PC-9 (cell line): ENCODE measurements at regions of chr14 and their contacts with region 1.

Region 1: GRCh38 chr14:60184146-60184904 is 19.1 kb upstream of the DHRS7 start:
- DNase-seq: peak in 1 of 2 experiments; percentile 61
- H3K4me3 ChIP-seq: peak overlapping the region; percentile 55
- H3K27ac ChIP-seq: 0 out of 2 replicates have a peak overlapping the region, but pooled peaks have one; percentile 6
- H3K4me1 ChIP-seq: peaks cover 10% of the 10 kb centered on the region; the same call in 1 of the 2 replicates
- H3K27me3 ChIP-seq: no peaks in the 10 kb centered on the region
- CTCF ChIP-seq: peak; percentile 96

Region 2: GRCh38 chr14:59028476-59029202 is 1155.7 kb before region 1 on chr14:
- CTCF ChIA-PET with region 1: no interaction called
- POLR2A ChIA-PET with region 1: no interaction called
- intact Hi-C with region 1: loop called (anchors 5 kb)
- DNase-seq: peak; percentile 56 to 57
- H3K4me3 ChIP-seq: no peak overlapping the region
- H3K27ac ChIP-seq: no peak overlapping the region
- H3K4me1 ChIP-seq: no peaks in the 10 kb centered on the region
- H3K27me3 ChIP-seq: no peaks in the 10 kb centered on the region
- CTCF ChIP-seq: peak; percentile 79

Region 3: DNA sequence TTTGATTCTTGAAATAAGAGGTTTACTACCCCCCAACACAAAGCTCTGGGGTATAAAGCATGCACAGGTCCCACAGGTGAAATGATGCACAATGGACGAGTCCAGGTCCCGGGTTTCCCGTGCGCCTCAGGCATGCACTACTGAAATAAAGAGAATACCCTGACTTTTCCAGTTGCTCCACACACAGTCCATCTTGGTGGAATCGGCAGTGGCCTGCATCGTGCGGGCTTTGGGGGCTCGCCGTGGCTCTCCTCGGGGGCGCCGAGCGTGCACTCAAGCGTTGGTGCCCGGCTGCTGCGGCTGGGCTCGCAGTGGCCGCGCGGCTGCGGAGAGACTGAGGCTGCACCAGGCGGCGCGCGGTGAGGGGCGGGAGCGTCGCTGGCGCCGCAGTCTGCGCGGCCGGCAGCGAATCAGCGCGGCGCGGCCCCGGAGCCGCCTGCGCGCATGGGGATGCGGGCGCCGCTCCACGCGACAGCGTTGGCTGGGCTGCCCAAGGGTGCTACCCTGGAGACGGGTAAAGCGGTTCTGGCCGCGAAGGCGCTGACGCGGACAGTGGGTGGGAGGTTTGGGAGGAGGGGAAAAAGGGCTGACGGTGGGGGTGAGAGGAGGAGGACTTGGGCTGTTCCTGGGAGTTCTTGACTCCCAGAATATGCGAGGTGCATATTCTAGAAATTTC is 553.9 kb before region 1 on chr14:
- CTCF ChIA-PET with region 1: no interaction called
- POLR2A ChIA-PET with region 1: no interaction called
- intact Hi-C with region 1: loop called (anchors 2 kb)
- DNase-seq: no peak
- H3K4me3 ChIP-seq: no peak overlapping the region
- H3K27ac ChIP-seq: no peak overlapping the region
- H3K4me1 ChIP-seq: no peaks in the 10 kb centered on the region
- H3K27me3 ChIP-seq: no peaks in the 10 kb centered on the region; the same call in 1 of the 2 replicates
- CTCF ChIP-seq: no peak

Region 4: GRCh38 chr14:59897761-59898383 is 286.5 kb before region 1 on chr14:
- CTCF ChIA-PET with region 1: no interaction called
- POLR2A ChIA-PET with region 1: no interaction called
- intact Hi-C with region 1: no loop called
- DNase-seq: peak in 1 of 2 experiments; percentile 14
- H3K4me3 ChIP-seq: no peak overlapping the region
- H3K27ac ChIP-seq: no peak overlapping the region
- H3K4me1 ChIP-seq: no peaks in the 10 kb centered on the region
- H3K27me3 ChIP-seq: no peaks in the 10 kb centered on the region
- CTCF ChIP-seq: peak; percentile 71

Region 5: DNA sequence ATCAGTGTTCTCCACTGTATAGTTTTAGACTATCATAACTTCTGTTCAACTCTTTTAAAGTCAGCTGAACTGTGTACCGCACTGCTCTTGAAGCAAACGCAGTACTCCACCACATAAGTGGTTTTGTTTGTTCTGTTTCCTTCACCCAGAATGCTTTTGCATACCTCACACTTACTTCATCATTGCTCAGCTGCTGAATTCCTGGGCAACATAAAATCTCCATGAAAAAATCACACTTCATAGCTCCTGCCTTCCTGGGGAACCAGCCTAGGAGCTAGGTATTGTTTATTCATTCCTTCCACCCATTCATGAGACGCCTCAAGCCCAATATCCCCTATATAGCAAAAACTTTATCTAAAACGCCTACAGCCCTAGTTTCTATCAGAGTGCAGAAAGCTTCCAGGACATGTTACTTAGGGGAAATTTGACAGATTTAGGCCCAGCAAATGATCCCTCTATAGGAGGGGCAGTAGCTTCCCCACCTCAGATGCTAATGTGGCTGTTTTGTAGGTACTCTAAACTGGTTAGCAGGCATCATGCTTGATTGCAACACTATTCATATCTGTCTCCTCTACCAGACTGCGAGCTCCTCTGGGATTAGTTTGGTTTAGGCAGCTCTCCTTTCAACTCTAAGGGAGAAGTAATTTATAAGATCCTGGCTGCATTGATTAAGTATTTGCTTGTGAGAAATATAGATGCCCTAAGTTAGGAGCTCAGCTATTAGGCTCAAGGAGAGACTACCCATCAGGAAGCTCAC is 219.9 kb before region 1 on chr14:
- CTCF ChIA-PET with region 1: interaction called, 11 read pairs
- POLR2A ChIA-PET with region 1: no interaction called
- intact Hi-C with region 1: loop called (anchors 1 kb)
- DNase-seq: no peak
- H3K4me3 ChIP-seq: no peak overlapping the region
- H3K27ac ChIP-seq: no peak overlapping the region
- H3K4me1 ChIP-seq: no peaks in the 10 kb centered on the region
- H3K27me3 ChIP-seq: no peaks in the 10 kb centered on the region
- CTCF ChIP-seq: no peak

Region 6: DNA sequence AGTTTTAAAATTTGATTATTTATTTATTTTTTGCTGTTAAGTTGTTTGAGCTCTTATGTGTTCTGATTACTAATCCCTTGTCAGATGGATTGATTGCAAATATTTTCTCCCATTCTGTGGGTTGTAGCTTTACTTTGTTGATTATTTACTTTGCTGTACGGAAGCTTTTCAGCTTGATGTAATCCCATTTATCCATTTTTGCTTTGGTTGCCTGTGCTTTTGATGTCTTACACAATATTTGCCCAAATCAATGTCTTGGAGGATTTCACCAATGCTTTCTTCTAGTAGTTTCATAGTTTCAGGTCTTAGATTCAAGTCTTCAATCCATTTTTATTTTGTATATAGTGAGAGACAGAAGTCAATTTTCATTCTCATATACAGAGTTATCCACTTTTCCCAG is 149.1 kb before region 1 on chr14:
- CTCF ChIA-PET with region 1: no interaction called
- POLR2A ChIA-PET with region 1: no interaction called
- intact Hi-C with region 1: no loop called
- DNase-seq: no peak
- H3K4me3 ChIP-seq: no peak overlapping the region
- H3K27ac ChIP-seq: no peak overlapping the region
- H3K4me1 ChIP-seq: no peaks in the 10 kb centered on the region
- H3K27me3 ChIP-seq: no peaks in the 10 kb centered on the region; the same call in 1 of the 2 replicates
- CTCF ChIP-seq: no peak

Region 7: DNA sequence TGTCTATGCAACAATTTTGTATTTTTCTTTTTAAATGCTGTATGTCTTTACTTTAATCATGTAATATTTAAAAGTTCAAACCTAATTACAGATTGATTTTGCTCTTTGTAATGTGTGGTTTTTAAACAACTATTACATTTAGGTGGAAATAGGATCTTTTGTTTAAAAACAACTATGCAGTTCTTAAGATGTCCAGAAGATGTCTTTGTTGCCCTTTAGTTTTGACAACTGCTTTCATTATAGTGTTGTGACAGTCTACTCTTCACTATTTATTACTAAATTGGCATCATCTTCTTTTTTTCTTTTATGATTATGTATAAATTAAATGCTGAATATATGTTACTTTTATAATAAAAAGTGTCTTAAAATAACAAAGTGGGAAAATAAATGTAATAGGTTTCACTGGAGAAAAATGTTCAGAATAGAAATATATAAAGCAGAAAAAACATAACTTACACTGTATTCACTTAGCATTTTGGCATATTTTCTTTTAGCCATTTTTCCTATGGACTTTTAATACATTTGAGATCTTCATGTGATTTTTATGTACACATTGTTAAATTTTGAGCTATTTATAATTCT is 119.7 kb before region 1 on chr14:
- CTCF ChIA-PET with region 1: interaction called, 8 read pairs
- POLR2A ChIA-PET with region 1: interaction called, 4 read pairs
- intact Hi-C with region 1: loop called (anchors 1 kb)
- DNase-seq: no peak
- H3K4me3 ChIP-seq: no peak overlapping the region
- H3K27ac ChIP-seq: no peak overlapping the region
- H3K4me1 ChIP-seq: peaks cover 18% of the 10 kb centered on the region
- H3K27me3 ChIP-seq: no peaks in the 10 kb centered on the region
- CTCF ChIP-seq: peak; percentile 75

Region 8: DNA sequence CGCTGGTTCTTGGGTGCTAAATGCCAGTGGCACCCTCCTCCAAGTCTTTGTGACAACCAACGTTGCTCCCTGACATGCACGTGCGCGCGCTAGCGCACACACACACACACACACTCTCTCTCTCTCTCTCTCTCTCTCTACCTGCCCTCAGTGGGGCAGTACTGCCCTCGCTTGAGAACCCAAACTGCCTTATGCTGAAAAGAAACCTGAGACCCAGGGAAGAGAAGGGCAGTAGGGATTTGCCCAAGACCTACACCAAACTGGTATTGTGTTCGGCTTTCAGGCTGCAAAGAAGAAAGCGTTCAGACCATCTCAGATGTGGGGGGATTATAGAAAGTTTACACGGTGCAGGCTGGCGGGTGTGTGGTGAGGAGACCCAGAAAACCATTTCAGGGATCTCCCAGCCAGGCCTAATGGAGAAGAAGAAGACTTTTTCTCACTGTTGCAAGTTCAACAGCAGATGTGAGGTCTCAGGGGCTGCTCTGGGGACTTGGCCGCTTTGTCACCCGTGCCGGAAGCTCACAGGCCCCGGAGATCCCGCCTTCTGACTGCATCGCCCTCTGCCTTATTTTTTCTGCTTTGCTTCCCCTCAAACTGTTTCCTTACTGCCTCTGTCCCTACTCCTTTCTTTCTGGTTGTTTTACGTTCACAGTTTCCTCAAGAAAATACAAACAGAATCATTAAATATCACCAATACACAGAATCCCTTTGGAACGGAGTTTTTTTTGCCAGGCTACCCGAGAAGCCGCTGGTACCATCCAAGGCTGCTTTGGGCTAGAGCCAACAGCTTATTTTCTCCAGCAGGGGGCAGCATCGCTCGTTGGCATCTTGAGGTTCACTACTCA is 147.1 kb after region 1 on chr14:
- CTCF ChIA-PET with region 1: no interaction called
- POLR2A ChIA-PET with region 1: no interaction called
- intact Hi-C with region 1: loop called (anchors 5 kb)
- DNase-seq: peak in 1 of 2 experiments; percentile 66
- H3K4me3 ChIP-seq: peak overlapping the region; percentile 66
- H3K27ac ChIP-seq: no peak overlapping the region
- H3K4me1 ChIP-seq: no peaks in the 10 kb centered on the region
- H3K27me3 ChIP-seq: no peaks in the 10 kb centered on the region
- CTCF ChIP-seq: peak; percentile 98

Region 9: GRCh38 chr14:60561845-60562746 is 377.8 kb after region 1 on chr14:
- CTCF ChIA-PET with region 1: no interaction called
- POLR2A ChIA-PET with region 1: no interaction called
- intact Hi-C with region 1: loop called (anchors 5 kb)
- DNase-seq: peak; percentile 36 to 59
- H3K4me3 ChIP-seq: no peak overlapping the region
- H3K27ac ChIP-seq: no peak overlapping the region
- H3K4me1 ChIP-seq: no peaks in the 10 kb centered on the region
- H3K27me3 ChIP-seq: no peaks in the 10 kb centered on the region
- CTCF ChIP-seq: peak; percentile 79